ENCODE measurements at regions of chr11 and their contacts with region 1.

Region 1: DNA sequence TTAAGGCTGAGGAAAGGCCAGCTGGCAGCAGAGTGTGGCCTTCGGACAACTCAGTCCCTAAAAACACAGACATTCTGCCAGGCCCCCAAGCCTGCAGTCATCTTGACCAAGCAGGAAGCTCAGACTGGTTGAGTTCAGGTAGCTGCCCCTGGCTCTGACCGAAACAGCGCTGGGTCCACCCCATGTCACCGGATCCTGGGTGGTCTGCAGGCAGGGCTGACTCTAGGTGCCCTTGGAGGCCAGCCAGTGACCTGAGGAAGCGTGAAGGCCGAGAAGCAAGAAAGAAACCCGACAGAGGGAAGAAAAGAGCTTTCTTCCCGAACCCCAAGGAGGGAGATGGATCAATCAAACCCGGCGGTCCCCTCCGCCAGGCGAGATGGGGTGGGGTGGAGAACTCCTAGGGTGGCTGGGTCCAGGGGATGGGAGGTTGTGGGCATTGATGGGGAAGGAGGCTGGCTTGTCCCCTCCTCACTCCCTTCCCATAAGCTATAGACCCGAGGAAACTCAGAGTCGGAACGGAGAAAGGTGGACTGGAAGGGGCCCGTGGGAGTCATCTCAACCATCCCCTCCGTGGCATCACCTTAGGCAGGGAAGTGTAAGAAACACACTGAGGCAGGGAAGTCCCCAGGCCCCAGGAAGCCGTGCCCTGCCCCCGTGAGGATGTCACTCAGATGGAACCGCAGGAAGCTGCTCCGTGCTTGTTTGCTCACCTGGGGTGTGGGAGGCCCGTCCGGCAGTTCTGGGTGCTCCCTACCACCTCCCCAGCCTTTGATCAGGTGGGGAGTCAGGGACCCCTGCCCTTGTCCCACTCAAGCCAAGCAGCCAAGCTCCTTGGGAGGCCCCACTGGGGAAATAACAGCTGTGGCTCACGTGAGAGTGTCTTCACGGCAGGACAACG is 11.7 kb downstream of the CXCR5 start:
- DNase-seq: peak in 2 of 5 donors; percentile 26 to 56
- ATAC-seq: no peak
- H3K4me3 ChIP-seq: no peak overlapping the region
- H3K27ac ChIP-seq: peak overlapping the region in 2 of 12 donors; percentile 37 to 43
- H3K4me1 ChIP-seq: peaks cover 0 to 21% (median 0%) of the 10 kb centered on the region in 12 donors
- H3K27me3 ChIP-seq: no peaks in the 10 kb centered on the region
- CTCF ChIP-seq: no peak
- POLR2A ChIP-seq: no peak

Region 2: GRCh38 chr11:118771547-118772288 is 123.7 kb before region 1 on chr11:
- intact Hi-C with region 1: loop called in 1 of 10 experiments (anchors 10 kb)
- DNase-seq: no peak
- ATAC-seq: no peak
- H3K4me3 ChIP-seq: peak overlapping the region in 1 of 12 donors; percentile 27
- H3K27ac ChIP-seq: peak overlapping the region in 6 of 12 donors; percentile 13 to 82 (median 27)
- H3K4me1 ChIP-seq: peaks cover 4 to 96% (median 81%) of the 10 kb centered on the region in 12 donors
- H3K27me3 ChIP-seq: no peaks in the 10 kb centered on the region
- CTCF ChIP-seq: no peak
- POLR2A ChIP-seq: no peak

Region 3: GRCh38 chr11:119168471-119169281 is 273.3 kb after region 1 on chr11 and contains the start of gene NLRX1:
- intact Hi-C with region 1: no loop called
- DNase-seq: peak; percentile 85 to 92 (median 89)
- ATAC-seq: peak; percentile 86 to 96 (median 94)
- H3K4me3 ChIP-seq: peak within 1 kb of the TSS; percentile 40 to 99 (median 92)
- H3K27ac ChIP-seq: peak within 1 kb of the TSS; percentile 80 to 98 (median 96)
- H3K4me1 ChIP-seq: peaks cover 0 to 19% (median 6%) of the 10 kb centered on the region in 12 donors
- H3K27me3 ChIP-seq: no peaks in the 10 kb centered on the region
- CTCF ChIP-seq: peak; percentile 76 to 90 (median 85)
- POLR2A ChIP-seq: peak; percentile 12 to 71
- total RNA-seq, gene NLRX1: 19.7 to 47.0 (median 30.7) TPM

Region 4: DNA sequence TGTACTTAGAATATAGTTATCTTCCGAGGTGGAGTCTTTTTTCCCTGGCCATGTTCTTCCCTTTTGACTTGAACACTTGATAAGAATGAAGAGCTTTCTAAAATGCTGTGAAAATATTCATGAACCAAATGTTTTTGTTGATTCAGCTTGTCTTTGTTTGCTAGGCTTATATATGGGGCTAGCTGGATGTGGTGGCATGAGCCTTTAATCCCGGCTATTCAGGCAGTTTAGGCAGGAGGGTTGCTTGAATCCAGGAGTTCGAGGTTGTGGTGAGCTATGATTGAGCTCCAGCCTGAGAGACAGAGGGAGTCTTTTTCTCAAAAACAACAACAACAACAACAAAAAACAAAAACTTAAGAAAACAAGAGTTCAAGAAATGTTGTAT is 333.9 kb after region 1 on chr11:
- intact Hi-C with region 1: no loop called
- DNase-seq: no peak
- ATAC-seq: no peak
- H3K4me3 ChIP-seq: no peak overlapping the region
- H3K27ac ChIP-seq: no peak overlapping the region
- H3K4me1 ChIP-seq: peaks cover 0 to 14% (median 0%) of the 10 kb centered on the region in 12 donors
- H3K27me3 ChIP-seq: no peaks in the 10 kb centered on the region
- CTCF ChIP-seq: no peak
- POLR2A ChIP-seq: no peak

Region 5: DNA sequence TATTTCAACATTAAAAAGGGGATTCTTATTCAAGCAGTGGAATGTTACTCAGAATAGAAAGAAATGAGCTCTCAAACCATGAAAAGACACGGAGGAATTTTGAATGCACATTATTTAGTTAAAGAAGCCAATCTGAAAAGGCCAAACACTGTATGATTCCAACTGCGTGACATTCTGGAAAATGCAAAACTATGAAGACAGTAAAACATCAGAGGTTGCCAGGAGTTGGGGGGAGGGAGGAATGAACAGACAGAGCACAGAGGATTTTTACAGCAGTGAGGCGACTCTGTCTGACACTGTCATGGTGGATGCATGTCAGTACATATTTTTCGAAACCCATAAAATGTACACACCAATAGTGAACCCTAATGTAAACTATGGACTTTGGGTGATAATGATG is 550.5 kb after region 1 on chr11:
- intact Hi-C with region 1: no loop called
- DNase-seq: no peak
- ATAC-seq: no peak
- H3K4me3 ChIP-seq: no peak overlapping the region
- H3K27ac ChIP-seq: no peak overlapping the region
- H3K4me1 ChIP-seq: peaks cover 0 to 7% (median 0%) of the 10 kb centered on the region in 12 donors
- H3K27me3 ChIP-seq: peaks cover 0 to 4% (median 0%) of the 10 kb centered on the region in 9 donors
- CTCF ChIP-seq: no peak
- POLR2A ChIP-seq: no peak

Measured in heart left ventricle (tissue), 16 donors.